ENCODE measurements at regions of chr9 and their contacts with region 1.

Region 1: DNA sequence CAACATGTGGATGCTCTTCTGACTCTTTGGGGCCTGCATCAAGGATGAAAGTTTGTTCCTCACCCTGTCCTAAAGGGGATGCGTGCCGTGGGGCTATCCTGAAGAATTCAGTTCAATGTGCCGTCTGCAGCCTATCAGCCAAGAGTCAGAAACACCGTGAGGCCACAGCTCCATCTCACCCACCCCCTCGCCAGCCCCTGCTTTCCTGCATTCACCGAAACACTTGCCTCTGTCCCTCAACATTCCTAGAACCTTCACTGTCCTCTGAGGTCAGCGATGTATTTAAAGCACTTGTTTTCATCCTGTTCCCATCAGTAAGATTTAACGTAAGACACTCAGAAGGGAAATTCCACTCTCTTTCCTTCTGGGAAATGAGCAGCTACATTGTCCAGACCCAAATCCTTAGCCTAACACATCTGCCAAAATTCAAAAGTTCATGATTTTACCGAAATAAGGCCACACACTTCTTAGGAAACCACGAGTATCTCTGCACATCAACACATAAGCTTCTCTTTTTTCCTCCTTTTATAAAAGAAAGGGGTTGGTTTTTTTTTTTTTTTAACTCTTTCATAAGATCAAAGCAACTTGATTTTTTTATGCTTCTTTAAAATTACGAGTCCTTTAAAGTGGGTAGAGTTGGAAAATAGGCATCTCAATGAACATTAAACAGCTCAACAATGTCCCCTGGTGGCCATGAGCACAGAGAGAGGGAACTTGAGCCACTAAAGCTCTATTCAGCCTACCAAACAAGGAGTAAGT is 100.7 kb downstream of the SUSD1 start:
- DNase-seq: peak; percentile 85
- H3K4me3 Mint-ChIP-seq: no peak overlapping the region
- H3K27ac Mint-ChIP-seq: no peak overlapping the region
- H3K4me1 Mint-ChIP-seq: peaks cover 28% of the 10 kb centered on the region
- H3K27me3 Mint-ChIP-seq: no peaks in the 10 kb centered on the region

Region 2: DNA sequence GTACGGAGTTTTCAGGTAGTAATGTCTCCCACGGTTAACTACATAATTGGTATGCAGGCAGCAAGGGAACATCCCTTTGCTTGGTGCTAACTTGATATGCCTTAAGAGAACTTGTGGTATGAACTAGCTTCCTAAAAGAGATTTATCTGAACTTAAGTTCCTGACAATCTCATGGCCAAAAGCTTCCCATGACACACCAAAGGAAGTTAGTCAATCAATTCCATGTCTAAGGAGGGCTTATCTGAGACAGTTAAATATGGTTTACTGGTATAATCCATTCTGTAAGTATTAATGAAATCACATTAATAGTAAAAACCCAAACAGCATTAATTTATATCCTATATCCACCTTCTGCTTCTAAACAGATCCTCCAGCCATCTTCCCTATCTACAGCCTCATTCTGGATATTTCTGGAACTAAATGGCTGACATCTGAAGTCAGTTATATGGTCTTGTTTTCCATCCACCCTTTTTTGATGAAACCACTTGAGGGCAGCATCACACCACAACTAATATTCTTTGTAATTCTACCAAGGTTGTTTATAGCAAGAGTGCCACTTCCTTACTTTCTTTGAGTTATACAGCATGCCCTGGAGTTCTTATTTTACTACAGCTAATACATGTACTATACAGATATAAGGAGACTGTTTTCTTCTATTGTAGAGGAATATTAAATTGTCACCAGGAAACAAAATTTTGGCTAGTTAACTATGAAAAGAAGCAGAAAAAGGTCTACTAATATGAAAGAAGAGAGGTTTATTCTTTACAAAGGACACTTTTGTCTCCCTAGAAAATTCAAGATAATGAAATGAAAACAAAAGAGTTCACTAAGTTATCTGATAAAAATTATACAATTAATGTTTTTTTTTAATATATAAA is 314.4 kb before region 1 on chr9:
- CTCF ChIA-PET with region 1: interaction called, 81 read pairs
- intact Hi-C with region 1: loop called (anchors 1 kb)
- DNase-seq: peak; percentile 71
- H3K4me3 Mint-ChIP-seq: no peak overlapping the region
- H3K27ac Mint-ChIP-seq: no peak overlapping the region
- H3K4me1 Mint-ChIP-seq: peaks cover 4% of the 10 kb centered on the region
- H3K27me3 Mint-ChIP-seq: no peaks in the 10 kb centered on the region

Region 3: GRCh38 chr9:111828193-111828592 is 246.2 kb before region 1 on chr9:
- CTCF ChIA-PET with region 1: interaction called, 7 read pairs
- intact Hi-C with region 1: loop called (anchors 1 kb)
- DNase-seq: no peak
- H3K4me3 Mint-ChIP-seq: no peak overlapping the region
- H3K27ac Mint-ChIP-seq: no peak overlapping the region
- H3K4me1 Mint-ChIP-seq: no peaks in the 10 kb centered on the region
- H3K27me3 Mint-ChIP-seq: no peaks in the 10 kb centered on the region

Region 4: GRCh38 chr9:111975709-111976108 is 98.7 kb before region 1 on chr9:
- CTCF ChIA-PET with region 1: interaction called, 3 read pairs
- intact Hi-C with region 1: loop called (anchors 1 kb)
- DNase-seq: peak; percentile 55
- H3K4me3 Mint-ChIP-seq: no peak overlapping the region
- H3K27ac Mint-ChIP-seq: no peak overlapping the region
- H3K4me1 Mint-ChIP-seq: peaks cover 8% of the 10 kb centered on the region
- H3K27me3 Mint-ChIP-seq: no peaks in the 10 kb centered on the region

Region 5: GRCh38 chr9:112002131-112002846 is 72.1 kb before region 1 on chr9:
- CTCF ChIA-PET with region 1: interaction called, 10 read pairs
- intact Hi-C with region 1: no loop called
- DNase-seq: peak; percentile 23
- H3K4me3 Mint-ChIP-seq: no peak overlapping the region
- H3K27ac Mint-ChIP-seq: no peak overlapping the region
- H3K4me1 Mint-ChIP-seq: peaks cover 31% of the 10 kb centered on the region
- H3K27me3 Mint-ChIP-seq: peaks cover 4% of the 10 kb centered on the region

Region 6: DNA sequence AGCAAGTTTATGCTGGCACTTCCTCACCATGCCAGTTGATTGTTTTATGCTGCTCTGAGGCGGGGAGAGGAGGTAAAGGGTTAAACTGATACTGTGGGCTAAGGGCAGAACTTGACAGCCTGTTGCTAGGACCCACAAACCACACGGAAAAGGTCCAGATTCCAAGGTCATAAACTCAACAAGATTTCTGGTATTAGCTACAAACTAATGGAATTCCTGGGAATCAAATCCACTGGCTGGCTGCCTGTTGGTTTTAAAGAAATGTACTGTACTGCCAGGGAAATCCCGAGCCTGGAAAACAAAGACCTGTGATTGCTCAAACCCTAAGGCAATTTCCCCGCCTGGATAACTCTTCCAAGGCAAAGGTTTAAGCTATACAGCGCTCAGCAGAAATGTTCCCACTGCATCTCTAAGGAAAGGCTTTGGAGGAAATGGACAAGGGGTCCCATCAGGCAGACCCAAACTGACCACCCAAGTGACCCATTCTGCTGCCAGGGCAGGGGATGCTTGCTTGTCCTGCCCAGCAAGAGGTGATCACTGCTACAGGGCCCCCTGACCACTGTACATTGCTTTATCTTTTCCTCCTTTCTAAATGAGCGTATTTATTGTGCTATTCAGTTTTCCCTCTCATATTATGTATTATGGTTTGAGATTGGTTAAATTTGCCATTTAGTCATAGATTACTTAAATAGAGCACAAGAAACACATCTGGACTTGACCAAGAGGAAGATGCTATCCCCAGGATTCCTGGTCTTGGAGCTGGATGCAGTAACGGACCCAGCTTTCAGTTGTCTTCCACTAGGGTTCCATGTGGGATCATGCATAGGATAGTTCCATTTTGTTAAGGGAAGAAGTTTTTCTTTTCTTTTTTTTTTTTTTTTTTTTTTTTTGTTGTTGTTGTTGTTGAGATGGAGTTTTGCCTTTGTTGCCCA is 23.6 kb before region 1 on chr9:
- CTCF ChIA-PET with region 1: interaction called, 12 read pairs
- intact Hi-C with region 1: no loop called
- DNase-seq: no peak
- H3K4me3 Mint-ChIP-seq: no peak overlapping the region
- H3K27ac Mint-ChIP-seq: no peak overlapping the region
- H3K4me1 Mint-ChIP-seq: peaks cover 11% of the 10 kb centered on the region
- H3K27me3 Mint-ChIP-seq: no peaks in the 10 kb centered on the region

Region 7: DNA sequence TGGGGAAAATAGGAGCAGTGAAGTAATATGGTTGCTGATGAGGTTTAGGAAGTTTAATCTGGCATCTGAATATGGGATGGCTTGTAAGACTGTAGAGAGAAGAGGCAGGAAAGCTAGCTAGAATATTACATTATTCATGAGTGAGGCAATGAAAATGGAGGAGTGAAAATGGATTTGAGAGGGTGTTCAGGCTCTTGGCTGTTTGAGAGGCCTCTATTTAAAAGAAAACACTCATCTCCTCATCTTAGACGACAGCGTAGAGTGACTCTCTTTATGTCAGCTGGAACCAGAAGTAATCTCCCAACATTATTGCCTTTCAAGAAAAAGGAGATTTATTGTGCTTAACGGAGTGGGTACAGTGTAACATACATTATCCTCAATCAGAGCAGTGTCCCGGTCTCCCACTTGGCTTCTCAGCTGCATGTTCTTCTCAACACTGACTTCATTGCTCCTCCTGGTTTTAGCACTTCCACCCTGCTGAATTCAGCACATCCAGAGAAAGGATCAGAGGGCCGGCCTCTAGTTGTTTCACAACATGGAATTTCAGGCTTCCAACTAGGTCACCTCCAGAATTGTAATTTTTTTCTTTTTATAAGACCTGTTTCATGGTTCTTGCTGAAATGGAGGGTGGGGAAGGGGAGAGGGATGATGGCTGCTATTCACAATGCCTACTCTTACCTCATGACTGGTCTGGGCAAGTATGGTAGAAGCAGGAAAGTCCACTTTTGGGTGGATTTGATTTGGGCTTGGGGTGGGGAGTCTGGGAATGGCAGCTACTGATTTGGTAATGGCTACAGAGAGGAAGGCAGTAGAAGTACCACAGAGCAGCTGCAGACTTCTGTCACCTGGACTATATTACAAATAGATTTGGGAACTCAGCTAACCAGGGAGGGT is 359.3 kb after region 1 on chr9:
- CTCF ChIA-PET with region 1: no interaction called
- intact Hi-C with region 1: no loop called
- DNase-seq: no peak
- H3K4me3 Mint-ChIP-seq: no peak overlapping the region
- H3K27ac Mint-ChIP-seq: no peak overlapping the region
- H3K4me1 Mint-ChIP-seq: no peaks in the 10 kb centered on the region
- H3K27me3 Mint-ChIP-seq: no peaks in the 10 kb centered on the region

Measured in activated naive CD4-positive, alpha-beta T cell treated with anti-CD3 and anti-CD28 coated beads for 36 hours (primary cell).